Activated CD8-positive, alpha-beta memory T cell treated with anti-CD3 and anti-CD28 coated beads, Interleukin-2, amount 10 ng/mL, durations not matched to agents 7 days and 5 days (primary cell): ENCODE measurements at regions of chr2 and their contacts with region 1.

Region 1: DNA sequence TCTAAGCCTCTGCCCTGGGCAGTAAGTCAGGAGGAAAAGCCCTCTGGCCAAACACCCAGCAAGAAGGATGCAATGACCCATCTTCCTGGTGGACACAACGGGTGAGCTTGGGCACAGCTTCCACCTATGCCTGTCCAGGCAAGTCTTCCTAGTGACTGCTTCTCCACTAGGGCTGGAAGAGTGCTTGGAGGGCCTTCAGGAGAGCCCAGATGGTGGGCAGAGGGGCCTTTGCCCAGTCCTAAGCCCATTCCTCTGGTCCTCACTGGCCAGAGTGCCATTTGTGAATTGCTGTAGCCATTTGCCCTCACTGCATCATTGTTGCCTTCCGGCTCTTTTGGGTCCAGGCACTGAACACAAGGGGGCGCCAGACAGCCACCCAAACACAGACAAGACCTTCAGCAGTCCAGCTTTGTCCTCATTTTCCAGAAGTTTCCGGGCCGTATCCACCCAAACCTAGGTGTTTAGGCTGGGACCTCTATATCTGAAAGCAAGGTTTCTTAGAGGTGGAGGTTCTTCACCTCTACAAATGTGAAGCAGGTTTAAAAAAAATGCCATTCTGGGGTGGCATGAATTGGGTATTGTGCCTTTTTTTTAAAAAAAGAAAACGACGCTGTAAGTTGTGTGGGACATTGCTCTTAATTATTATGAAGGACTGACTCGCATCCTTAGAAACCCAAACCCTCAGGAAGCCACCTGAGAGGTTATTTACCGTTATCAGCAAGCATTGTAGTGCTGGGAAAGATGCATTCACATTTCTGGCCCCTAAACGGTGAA is 29.5 kb downstream of the PAX8 start:
- DNase-seq: peak; percentile 85
- ATAC-seq: peak; percentile 61
- H3K4me3 Mint-ChIP-seq: no peak overlapping the region
- H3K27ac Mint-ChIP-seq: peak overlapping the region; percentile 66
- H3K4me1 Mint-ChIP-seq: peaks cover 53% of the 10 kb centered on the region
- H3K27me3 Mint-ChIP-seq: no peaks in the 10 kb centered on the region

Region 2: DNA sequence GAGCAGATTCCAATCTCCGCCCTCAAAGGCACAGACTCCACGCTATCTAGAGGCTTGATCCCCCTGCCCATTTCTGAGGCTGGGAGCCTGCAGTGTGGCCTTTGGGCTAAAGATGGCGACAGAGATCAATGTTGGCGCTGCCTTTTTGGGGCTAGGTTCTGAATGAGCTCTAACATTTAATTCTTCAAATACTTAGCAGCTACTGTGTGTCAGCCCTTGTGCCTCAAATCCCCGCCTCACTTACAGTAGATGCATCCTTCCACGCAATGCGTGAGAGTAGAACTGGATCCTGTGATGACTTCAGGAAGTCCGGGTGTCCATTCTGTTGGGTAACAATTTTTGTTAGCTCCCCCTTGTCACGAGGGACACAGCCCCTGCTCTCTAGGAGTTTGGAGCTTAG is 169.1 kb before region 1 on chr2:
- CTCF ChIA-PET with region 1: interaction called, 16 read pairs
- DNase-seq: peak; percentile 68
- ATAC-seq: peak; percentile 74
- H3K4me3 Mint-ChIP-seq: no peak overlapping the region
- H3K27ac Mint-ChIP-seq: no peak overlapping the region
- H3K4me1 Mint-ChIP-seq: peaks cover 13% of the 10 kb centered on the region
- H3K27me3 Mint-ChIP-seq: peaks cover 5% of the 10 kb centered on the region

Region 3: GRCh38 chr2:113233593-113234550 is 15.3 kb before region 1 on chr2:
- CTCF ChIA-PET with region 1: interaction called, 65 read pairs
- DNase-seq: no peak
- ATAC-seq: no peak
- H3K4me3 Mint-ChIP-seq: no peak overlapping the region
- H3K27ac Mint-ChIP-seq: no peak overlapping the region
- H3K4me1 Mint-ChIP-seq: peaks cover 46% of the 10 kb centered on the region
- H3K27me3 Mint-ChIP-seq: peaks cover 2% of the 10 kb centered on the region

Region 4: DNA sequence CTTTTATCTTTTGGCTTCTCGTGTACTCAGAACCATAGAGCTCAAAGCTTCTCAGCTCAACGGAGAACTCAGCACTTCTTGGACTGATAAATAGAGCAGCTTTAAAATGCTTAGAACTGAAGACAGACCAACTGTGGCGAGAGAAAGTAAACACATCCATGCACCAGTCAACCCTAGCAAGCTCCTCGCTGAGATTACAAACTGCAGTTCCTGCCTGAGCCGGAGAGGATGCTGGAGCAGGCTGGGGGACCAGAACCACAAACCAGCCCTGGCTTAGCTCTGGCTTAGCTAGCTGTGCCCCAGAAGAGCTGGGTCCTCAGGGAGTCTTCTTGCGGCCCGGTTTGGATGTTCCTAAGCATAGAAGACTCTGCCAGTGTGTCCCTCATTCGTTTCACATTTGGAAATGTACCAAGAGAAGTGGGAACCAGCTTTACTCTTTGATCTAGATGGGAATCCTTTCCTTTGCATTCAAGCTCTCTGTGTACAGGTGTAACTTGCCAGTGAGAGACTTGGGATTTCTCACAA is 23.9 kb after region 1 on chr2:
- CTCF ChIA-PET with region 1: interaction called, 36 read pairs
- DNase-seq: peak; percentile 71
- ATAC-seq: peak; percentile 93
- H3K4me3 Mint-ChIP-seq: no peak overlapping the region
- H3K27ac Mint-ChIP-seq: peak overlapping the region; percentile 45
- H3K4me1 Mint-ChIP-seq: peaks cover 22% of the 10 kb centered on the region
- H3K27me3 Mint-ChIP-seq: peaks cover 65% of the 10 kb centered on the region

Region 5: GRCh38 chr2:113357071-113357470 is 107.9 kb after region 1 on chr2:
- CTCF ChIA-PET with region 1: interaction called, 12 read pairs
- DNase-seq: peak; percentile 51
- ATAC-seq: peak; percentile 40
- H3K4me3 Mint-ChIP-seq: no peak overlapping the region
- H3K27ac Mint-ChIP-seq: no peak overlapping the region
- H3K4me1 Mint-ChIP-seq: peaks cover 47% of the 10 kb centered on the region
- H3K27me3 Mint-ChIP-seq: peaks cover 28% of the 10 kb centered on the region

Region 6: DNA sequence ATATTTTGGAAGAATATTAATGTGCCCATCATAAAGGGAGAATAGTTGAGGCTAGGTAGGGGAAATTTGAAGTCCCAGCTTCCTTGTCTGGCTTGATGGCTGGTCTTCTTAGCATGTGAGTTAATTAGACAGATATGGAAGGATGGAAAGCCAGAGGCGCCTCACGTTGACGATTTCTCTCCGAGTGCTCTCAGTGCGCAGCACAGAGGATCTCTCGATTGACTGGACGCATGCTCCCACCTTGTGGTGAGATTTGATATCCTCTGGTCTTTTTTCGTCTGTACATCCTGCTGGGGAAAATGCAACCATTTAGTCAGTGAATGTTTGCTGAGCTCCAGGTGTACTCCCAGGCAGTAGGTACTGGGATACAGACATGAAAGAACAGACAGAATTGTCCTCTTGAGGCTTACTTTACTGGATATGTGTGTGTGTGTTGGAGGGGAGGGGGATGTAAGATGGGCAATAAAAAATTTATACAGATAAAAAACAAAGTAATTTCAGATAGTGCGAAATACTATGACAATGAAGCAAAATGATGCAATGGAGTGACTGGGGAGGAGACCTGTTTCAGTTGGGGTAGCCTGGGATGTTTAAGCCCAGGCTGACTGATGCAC is 121.4 kb after region 1 on chr2:
- CTCF ChIA-PET with region 1: interaction called, 88 read pairs
- DNase-seq: peak; percentile 86
- ATAC-seq: peak; percentile 99
- H3K4me3 Mint-ChIP-seq: no peak overlapping the region
- H3K27ac Mint-ChIP-seq: peak overlapping the region; percentile 66
- H3K4me1 Mint-ChIP-seq: peaks cover 21% of the 10 kb centered on the region
- H3K27me3 Mint-ChIP-seq: peaks cover 10% of the 10 kb centered on the region

Region 7: GRCh38 chr2:113390124-113390849 is 141.1 kb after region 1 on chr2:
- CTCF ChIA-PET with region 1: interaction called, 52 read pairs
- DNase-seq: peak; percentile 74
- ATAC-seq: peak; percentile 92
- H3K4me3 Mint-ChIP-seq: peak overlapping the region; percentile 62
- H3K27ac Mint-ChIP-seq: peak overlapping the region; percentile 74
- H3K4me1 Mint-ChIP-seq: peaks cover 13% of the 10 kb centered on the region
- H3K27me3 Mint-ChIP-seq: peaks cover 26% of the 10 kb centered on the region